Activated CD8-positive, alpha-beta memory T cell treated with anti-CD3 and anti-CD28 coated beads, Interleukin-2, amount 10 ng/mL, durations not matched to agents 7 days and 5 days (primary cell): ENCODE measurements at regions of chr1 and their contacts with region 1.

Region 1: DNA sequence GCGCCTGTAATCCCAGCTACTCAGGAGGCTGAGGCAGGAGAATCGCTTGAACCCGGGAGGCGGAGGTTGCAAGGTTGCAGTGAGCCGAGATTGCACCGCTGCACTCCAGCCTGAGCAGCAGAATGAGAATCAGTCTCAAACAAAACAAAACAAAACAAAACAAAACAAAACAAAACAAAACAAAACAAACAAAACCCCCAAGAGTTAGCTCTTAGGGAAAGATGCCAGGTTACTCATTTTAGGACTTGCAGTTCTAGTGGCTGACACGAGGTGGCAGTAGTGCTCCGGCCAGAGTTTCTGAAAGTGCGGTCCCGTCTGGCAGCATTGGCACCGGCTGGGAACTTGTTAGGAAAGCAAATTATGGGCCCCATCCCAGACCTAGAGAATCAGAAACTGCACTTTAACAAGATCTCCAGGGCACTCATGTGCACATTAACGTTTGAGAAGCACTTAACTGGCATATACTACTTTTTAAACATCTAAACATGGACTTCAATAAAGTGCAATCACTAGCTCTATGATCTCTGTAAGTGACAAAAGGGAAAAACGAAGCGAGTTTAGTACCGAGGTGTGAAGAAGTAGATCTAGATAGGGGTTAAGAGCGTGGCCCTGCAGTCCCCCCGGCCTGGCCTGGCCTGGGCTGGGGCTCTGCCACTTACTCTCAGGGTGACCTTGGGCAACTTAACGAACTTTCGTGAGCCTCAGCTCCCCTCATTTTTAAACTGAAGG is 41.9 kb upstream of the TNFRSF1B start:
- DNase-seq: peak; percentile 83
- ATAC-seq: peak; percentile 69
- H3K4me3 Mint-ChIP-seq: no peak overlapping the region
- H3K27ac Mint-ChIP-seq: peak overlapping the region; percentile 55
- H3K4me1 Mint-ChIP-seq: peaks cover 17% of the 10 kb centered on the region
- H3K27me3 Mint-ChIP-seq: no peaks in the 10 kb centered on the region

Region 2: GRCh38 chr1:11501558-11501897 is 623.3 kb before region 1 on chr1:
- CTCF ChIA-PET with region 1: no interaction called
- DNase-seq: no peak
- ATAC-seq: peak; percentile 53
- H3K4me3 Mint-ChIP-seq: no peak overlapping the region
- H3K27ac Mint-ChIP-seq: no peak overlapping the region
- H3K4me1 Mint-ChIP-seq: no peaks in the 10 kb centered on the region
- H3K27me3 Mint-ChIP-seq: peaks cover 7% of the 10 kb centered on the region

Region 3: GRCh38 chr1:12107736-12108135 is 17.1 kb before region 1 on chr1:
- CTCF ChIA-PET with region 1: interaction called, 15 read pairs
- DNase-seq: no peak
- ATAC-seq: no peak
- H3K4me3 Mint-ChIP-seq: no peak overlapping the region
- H3K27ac Mint-ChIP-seq: no peak overlapping the region
- H3K4me1 Mint-ChIP-seq: peaks cover 4% of the 10 kb centered on the region
- H3K27me3 Mint-ChIP-seq: no peaks in the 10 kb centered on the region

Region 4: GRCh38 chr1:12153181-12153785 is 28.4 kb after region 1 on chr1:
- CTCF ChIA-PET with region 1: interaction called, 50 read pairs
- DNase-seq: no peak
- ATAC-seq: no peak
- H3K4me3 Mint-ChIP-seq: no peak overlapping the region
- H3K27ac Mint-ChIP-seq: peak overlapping the region; percentile 99
- H3K4me1 Mint-ChIP-seq: peaks cover 92% of the 10 kb centered on the region
- H3K27me3 Mint-ChIP-seq: no peaks in the 10 kb centered on the region

Region 5: GRCh38 chr1:12185918-12186678 is 61.2 kb after region 1 on chr1:
- CTCF ChIA-PET with region 1: interaction called, 18 read pairs
- DNase-seq: no peak
- ATAC-seq: no peak
- H3K4me3 Mint-ChIP-seq: no peak overlapping the region
- H3K27ac Mint-ChIP-seq: no peak overlapping the region
- H3K4me1 Mint-ChIP-seq: peaks cover 40% of the 10 kb centered on the region
- H3K27me3 Mint-ChIP-seq: no peaks in the 10 kb centered on the region

Region 6: DNA sequence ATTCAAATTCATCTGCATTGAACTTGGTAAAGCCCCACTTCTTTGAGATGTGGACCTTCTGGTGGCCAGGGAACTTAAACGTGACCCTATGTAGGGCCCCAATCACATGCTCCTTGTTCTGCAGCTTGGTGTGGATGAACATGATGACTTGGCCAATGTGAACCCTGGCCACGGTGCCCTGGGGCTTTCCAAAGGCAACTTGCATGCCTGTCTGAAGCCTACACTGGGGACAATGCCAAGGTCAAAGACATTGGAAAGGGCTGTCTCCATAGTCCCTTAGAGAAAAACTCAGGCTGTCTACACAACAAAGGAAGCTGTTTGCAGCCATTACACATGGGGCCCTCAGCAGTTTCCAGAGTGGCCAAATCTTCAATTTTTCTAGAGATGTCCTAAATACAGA is 96.0 kb after region 1 on chr1:
- CTCF ChIA-PET with region 1: interaction called, 69 read pairs
- DNase-seq: no peak
- ATAC-seq: no peak
- H3K4me3 Mint-ChIP-seq: no peak overlapping the region
- H3K27ac Mint-ChIP-seq: no peak overlapping the region
- H3K4me1 Mint-ChIP-seq: no peaks in the 10 kb centered on the region
- H3K27me3 Mint-ChIP-seq: peaks cover 5% of the 10 kb centered on the region

Region 7: DNA sequence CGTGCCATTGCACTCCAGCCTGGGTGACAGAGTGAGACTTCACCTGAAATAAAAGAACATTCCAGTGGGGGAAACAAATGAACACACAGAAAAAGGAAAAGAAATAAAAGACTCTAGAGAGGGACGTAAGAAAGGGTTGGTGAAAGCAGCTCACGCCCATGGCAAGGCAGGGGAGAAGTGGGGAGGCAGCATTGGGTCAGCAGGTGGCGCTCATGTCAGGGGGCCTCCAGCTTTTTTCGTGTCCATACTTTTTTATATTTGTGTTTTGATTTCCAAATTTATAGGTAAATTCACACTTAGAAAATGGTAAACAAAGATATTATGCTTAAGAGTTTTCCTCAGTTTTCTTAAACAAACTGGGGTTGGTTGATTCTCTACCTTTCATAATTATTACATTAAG is 150.5 kb after region 1 on chr1:
- CTCF ChIA-PET with region 1: interaction called, 20 read pairs
- DNase-seq: peak; percentile 59
- ATAC-seq: no peak
- H3K4me3 Mint-ChIP-seq: no peak overlapping the region
- H3K27ac Mint-ChIP-seq: no peak overlapping the region
- H3K4me1 Mint-ChIP-seq: no peaks in the 10 kb centered on the region
- H3K27me3 Mint-ChIP-seq: no peaks in the 10 kb centered on the region